ENCODE measurements at regions of chr21 and their contacts with region 1.

Region 1: DNA sequence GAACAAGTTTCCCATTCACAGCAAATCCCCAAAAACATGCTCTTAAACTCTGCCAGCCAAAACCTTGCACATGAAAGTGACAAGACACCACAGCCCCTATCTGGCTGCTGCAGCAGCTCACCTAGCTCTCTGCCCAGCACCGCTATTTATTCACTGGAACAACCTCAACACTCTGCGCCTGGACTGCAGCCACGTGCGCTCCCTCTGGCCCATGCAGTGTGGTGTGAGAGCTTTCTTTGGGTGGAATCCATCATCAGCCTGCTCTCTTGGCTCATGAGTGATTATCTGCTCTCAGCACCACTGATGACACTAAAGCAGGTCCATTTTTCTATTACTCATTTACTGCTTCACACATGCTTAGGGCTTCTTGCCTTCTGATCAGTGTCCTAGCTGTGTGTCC is 11.4 kb downstream of the KCNJ6 start:
- DNase-seq: peak; percentile 29 to 41
- ATAC-seq: peak; percentile 46 to 95 (median 82)
- H3K4me3 ChIP-seq: no peak overlapping the region
- H3K27ac ChIP-seq: no peak overlapping the region
- H3K4me1 ChIP-seq: peaks cover 0 to 7% (median 0%) of the 10 kb centered on the region in 9 donors
- H3K27me3 ChIP-seq: peaks cover 0 to 26% (median 11%) of the 10 kb centered on the region in 7 donors
- CTCF ChIP-seq: no peak

Region 2: GRCh38 chr21:37711836-37712568 is 192.9 kb before region 1 on chr21:
- intact Hi-C with region 1: loop called in 4 of 10 experiments (anchors 5 to 10 kb)
- DNase-seq: peak; percentile 59 to 63
- ATAC-seq: peak; percentile 73 to 91 (median 82)
- H3K4me3 ChIP-seq: no peak overlapping the region
- H3K27ac ChIP-seq: no peak overlapping the region
- H3K4me1 ChIP-seq: peaks cover 0 to 20% (median 12%) of the 10 kb centered on the region in 9 donors
- H3K27me3 ChIP-seq: peaks cover 0 to 6% (median 0%) of the 10 kb centered on the region in 7 donors
- CTCF ChIP-seq: peak; percentile 61 to 86 (median 80)

Measured in heart right ventricle (tissue), 16 donors.